H1 (cell line): ENCODE measurements at regions of chr10 and their contacts with region 1.

Region 1: DNA sequence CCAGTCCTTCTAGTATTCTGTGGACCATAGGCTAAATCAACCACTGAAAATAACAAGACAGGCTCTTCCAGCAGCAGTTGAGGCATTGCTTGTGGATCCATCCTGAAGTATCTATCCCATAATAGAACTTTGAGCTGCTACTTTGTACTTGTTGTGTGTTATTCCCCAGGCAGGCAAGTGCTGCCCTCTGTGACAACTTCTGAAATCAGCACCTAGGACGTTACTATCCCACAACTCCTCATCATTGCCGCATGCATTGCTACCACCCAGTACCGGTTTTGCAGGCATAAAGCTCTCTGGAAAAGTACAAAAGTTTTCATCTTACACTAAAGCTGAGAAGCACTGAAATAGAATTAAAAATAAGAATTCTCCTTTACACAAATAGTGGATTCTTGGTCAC is 145.3 kb downstream of the HTR7 start:
- DNase-seq: no peak
- H3K4me3 ChIP-seq: no peak overlapping the region
- H3K27ac ChIP-seq: no peak overlapping the region
- H3K4me1 ChIP-seq: no peaks in the 10 kb centered on the region
- H3K27me3 ChIP-seq: no peaks in the 10 kb centered on the region
- CTCF ChIP-seq: peak in 2 of 3 experiments; percentile 31 to 50; a peak in 3 of 4 replicates
- EP300 ChIP-seq: no peak
- POLR2A ChIP-seq: no peak
- RAD21 ChIP-seq: peak; percentile 40 to 49; a peak in 3 of 4 replicates

Region 2: DNA sequence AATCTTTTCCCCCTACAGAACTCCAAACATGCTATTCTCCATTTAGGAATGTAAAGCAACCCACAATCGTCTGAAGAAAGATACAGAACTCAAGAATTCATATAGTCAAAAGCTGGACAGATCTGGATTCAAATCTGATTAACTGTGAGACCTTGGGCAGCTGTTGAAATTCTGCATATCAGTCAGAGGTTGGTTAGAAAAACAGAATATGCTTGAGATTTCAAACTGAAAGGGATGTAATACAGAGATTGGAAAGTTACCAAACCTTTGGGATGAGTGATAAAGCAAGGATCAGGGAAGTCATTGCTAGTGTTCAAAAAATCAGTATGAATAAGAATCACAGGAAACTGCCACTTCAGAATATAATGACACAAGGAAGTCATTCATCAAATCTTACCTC is 261.3 kb before region 1 on chr10:
- CTCF ChIA-PET with region 1: no interaction called
- POLR2A ChIA-PET with region 1: no interaction called
- DNase-seq: no peak
- H3K4me3 ChIP-seq: no peak overlapping the region
- H3K27ac ChIP-seq: no peak overlapping the region
- H3K4me1 ChIP-seq: no peaks in the 10 kb centered on the region
- H3K27me3 ChIP-seq: peaks cover 0 to 2% (median 0%) of the 10 kb centered on the region in 4 experiments; a peak in 1 of 7 replicates
- CTCF ChIP-seq: no peak
- EP300 ChIP-seq: no peak
- POLR2A ChIP-seq: no peak
- RAD21 ChIP-seq: no peak

Region 3: GRCh38 chr10:90723416-90724068 is 11.0 kb after region 1 on chr10:
- CTCF ChIA-PET with region 1: interaction called, 15 read pairs
- POLR2A ChIA-PET with region 1: no interaction called
- DNase-seq: peak in 1 of 2 experiments; percentile 29
- H3K4me3 ChIP-seq: no peak overlapping the region
- H3K27ac ChIP-seq: no peak overlapping the region
- H3K4me1 ChIP-seq: peaks cover 2 to 9% (median 5%) of the 10 kb centered on the region in 4 experiments; a peak in 4 of 7 replicates
- H3K27me3 ChIP-seq: no peaks in the 10 kb centered on the region
- CTCF ChIP-seq: no peak
- EP300 ChIP-seq: no peak
- POLR2A ChIP-seq: no peak
- RAD21 ChIP-seq: no peak

Region 4: GRCh38 chr10:90945491-90946070 is 233.0 kb after region 1 on chr10:
- CTCF ChIA-PET with region 1: no interaction called
- POLR2A ChIA-PET with region 1: no interaction called
- DNase-seq: no peak
- H3K4me3 ChIP-seq: no peak overlapping the region
- H3K27ac ChIP-seq: no peak overlapping the region
- H3K4me1 ChIP-seq: no peaks in the 10 kb centered on the region
- H3K27me3 ChIP-seq: peaks cover 0 to 13% (median 3%) of the 10 kb centered on the region in 4 experiments; a peak in 5 of 7 replicates
- CTCF ChIP-seq: no peak
- EP300 ChIP-seq: no peak
- POLR2A ChIP-seq: no peak
- RAD21 ChIP-seq: no peak